OCI-LY7 (cell line): ENCODE measurements at regions of chr6 and their contacts with region 1.

Region 1: DNA sequence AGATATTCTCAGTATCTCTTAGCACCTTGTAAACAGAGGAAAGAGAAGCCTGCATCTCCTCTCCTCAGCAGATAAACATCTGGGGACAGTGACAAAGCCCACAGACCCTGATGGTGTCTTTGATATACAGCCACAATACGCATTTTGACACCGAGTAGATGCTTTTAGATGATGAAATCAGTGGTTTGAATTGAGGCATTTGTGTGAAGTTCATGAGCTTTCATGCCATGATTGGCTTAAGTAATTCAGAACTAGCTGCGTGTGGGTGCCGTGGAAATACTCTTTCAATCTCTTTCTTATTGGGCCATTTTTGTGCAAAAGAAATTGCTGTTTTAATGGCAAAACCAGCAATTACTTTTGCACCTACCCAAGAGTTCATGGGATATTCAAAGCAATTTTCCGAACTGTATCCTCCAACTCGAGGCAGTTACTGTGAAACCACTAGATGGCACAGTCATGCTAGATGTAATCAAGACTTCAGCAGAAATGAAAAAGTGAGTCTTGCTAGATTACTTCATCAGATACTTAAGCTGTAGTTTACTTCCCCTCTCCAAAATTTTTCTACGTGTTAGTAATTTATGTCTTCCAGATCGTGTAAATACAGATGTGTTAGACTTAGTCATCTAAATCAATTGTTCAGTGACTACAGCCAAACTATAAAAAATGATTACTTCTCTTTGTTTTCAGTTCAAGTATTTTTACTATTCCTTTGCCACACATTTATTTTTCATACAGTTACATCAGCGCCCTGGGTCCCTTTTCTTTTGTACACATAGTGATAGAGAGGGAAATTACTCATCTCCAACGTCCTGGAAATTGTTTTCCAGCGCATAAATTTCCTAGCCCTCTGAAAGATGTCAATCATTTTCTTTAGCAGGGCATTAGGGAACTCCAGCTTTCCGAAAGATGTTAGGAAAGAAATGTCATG is 49.4 kb downstream of the IYD start:
- DNase-seq: peak; percentile 91
- H3K4me3 ChIP-seq: peak overlapping the region; percentile 3
- H3K27ac ChIP-seq: peak overlapping the region; percentile 9
- H3K4me1 ChIP-seq: peaks cover 14% of the 10 kb centered on the region
- CTCF ChIP-seq: peak; percentile 98

Region 2: GRCh38 chr6:150573041-150573681 is 155.0 kb after region 1 on chr6:
- CTCF ChIA-PET with region 1: no interaction called
- POLR2A ChIA-PET with region 1: no interaction called
- intact Hi-C with region 1: no loop called
- DNase-seq: no peak
- H3K4me3 ChIP-seq: no peak overlapping the region
- H3K27ac ChIP-seq: no peak overlapping the region
- H3K4me1 ChIP-seq: peaks cover 10% of the 10 kb centered on the region
- CTCF ChIP-seq: no peak

Region 3: DNA sequence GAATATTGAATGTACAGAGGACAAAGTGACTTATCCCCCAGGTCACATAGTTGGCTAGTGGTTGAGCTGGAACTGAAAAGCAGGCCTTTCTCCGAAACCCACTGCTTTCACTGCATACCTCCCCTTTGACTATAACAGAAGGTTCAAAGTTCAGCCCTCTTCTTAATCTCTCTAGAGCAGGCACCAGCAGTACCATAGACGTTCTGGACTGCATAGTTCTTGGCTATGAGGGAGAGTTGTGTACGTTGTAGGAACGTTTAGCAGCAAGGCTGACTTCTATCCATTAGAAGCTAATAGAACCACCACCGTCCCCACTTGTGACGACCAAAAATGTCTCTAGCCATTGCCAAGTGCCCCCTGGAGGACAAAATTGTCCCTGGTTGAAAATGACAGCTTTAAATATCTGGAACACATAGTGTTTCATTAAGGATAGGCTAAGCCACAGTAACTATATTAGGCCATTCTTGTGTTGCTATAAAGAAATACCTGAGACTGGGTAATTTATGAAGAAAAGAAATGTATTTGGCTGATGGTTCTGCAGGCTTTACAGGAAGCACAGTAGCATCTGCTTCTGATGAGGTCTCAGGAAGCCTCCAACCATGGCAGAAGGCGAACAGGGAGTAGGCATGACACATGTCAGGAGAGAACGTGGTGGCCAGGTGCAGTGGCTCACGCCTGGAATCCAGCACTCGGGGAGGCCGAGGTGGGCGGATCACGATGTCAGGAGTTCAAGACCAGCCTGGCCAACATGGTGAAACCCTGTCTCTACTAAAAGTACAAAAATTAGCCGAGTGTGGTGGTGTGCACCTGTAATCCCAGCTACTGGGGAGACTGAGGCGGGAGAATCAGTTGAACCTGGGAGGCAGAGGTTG is 323.7 kb after region 1 on chr6:
- CTCF ChIA-PET with region 1: no interaction called
- POLR2A ChIA-PET with region 1: no interaction called
- intact Hi-C with region 1: loop called (anchors 1 kb)
- DNase-seq: peak; percentile 68
- H3K4me3 ChIP-seq: no peak overlapping the region
- H3K27ac ChIP-seq: no peak overlapping the region
- H3K4me1 ChIP-seq: peaks cover 4% of the 10 kb centered on the region
- CTCF ChIP-seq: peak; percentile 87

Region 4: GRCh38 chr6:150813319-150813992 is 395.3 kb after region 1 on chr6:
- CTCF ChIA-PET with region 1: interaction called, 8 read pairs
- POLR2A ChIA-PET with region 1: interaction called, 13 read pairs
- intact Hi-C with region 1: loop called (anchors 1 kb)
- DNase-seq: no peak
- H3K4me3 ChIP-seq: no peak overlapping the region
- H3K27ac ChIP-seq: no peak overlapping the region
- H3K4me1 ChIP-seq: peaks cover 8% of the 10 kb centered on the region
- CTCF ChIP-seq: no peak